ENCODE measurements at regions of chr1 and their contacts with region 1.

Region 1: GRCh38 chr1:179365320-179366092 is at the start of gene AXDND1:
- DNase-seq: peak; percentile 86
- ATAC-seq: peak; percentile 93
- H3K4me3 Mint-ChIP-seq: peak within 1 kb of the TSS; percentile 86
- H3K27ac Mint-ChIP-seq: peak within 1 kb of the TSS; percentile 99
- H3K4me1 Mint-ChIP-seq: peaks cover 8% of the 10 kb centered on the region
- H3K27me3 Mint-ChIP-seq: no peaks in the 10 kb centered on the region
- total RNA-seq, gene AXDND1: 0.64 to 0.85 TPM

Region 2: GRCh38 chr1:179293340-179294327 is 71.9 kb before region 1 on chr1 and contains the start of gene SOAT1:
- POLR2A ChIA-PET with region 1: interaction called, 24 read pairs
- DNase-seq: peak; percentile 97
- ATAC-seq: peak; percentile 98
- H3K4me3 Mint-ChIP-seq: peak within 1 kb of the TSS; percentile 100
- H3K27ac Mint-ChIP-seq: peak within 1 kb of the TSS; percentile 97
- H3K4me1 Mint-ChIP-seq: peaks cover 38% of the 10 kb centered on the region
- H3K27me3 Mint-ChIP-seq: no peaks in the 10 kb centered on the region
- total RNA-seq, gene SOAT1: 58.3 to 62.8 TPM